ENCODE measurements at regions of chr16 and their contacts with region 1.

Region 1: DNA sequence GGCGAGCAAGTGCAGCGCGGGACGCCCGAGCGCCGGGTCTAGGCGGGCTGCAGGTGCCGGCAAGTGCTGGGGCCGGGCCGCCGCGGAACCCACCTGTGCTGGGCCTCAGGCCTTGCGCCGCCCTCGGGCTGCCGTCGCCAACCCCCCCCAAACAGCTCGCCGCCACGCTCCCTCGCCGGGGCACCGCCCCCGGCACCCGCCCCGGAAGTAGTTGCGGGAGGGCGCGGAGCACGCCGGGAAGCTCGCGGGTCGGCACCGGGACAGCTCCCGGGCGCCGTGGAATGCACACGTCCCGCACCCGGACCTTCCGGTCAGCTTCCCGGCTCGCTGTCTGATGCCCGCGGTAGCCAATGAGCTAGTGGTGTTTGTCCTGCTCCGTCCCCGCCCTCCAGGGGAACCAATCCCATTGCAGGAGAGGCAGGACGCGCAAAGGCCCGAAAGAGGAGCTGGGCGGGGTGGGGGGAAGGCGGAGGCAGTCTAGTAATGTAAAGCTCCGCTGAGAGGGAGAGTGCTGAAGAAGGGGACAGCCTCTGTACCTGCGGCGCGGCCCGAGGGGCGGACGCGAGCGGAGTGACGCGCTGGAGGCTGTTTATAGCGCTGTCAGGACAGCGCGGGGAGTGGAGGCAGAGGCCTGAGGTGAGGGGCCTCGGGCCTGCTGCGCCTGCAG is at the starts of genes ANKS3 and DNAAF8:
- DNase-seq: peak; percentile 97
- ATAC-seq: peak; percentile 98
- H3K4me3 ChIP-seq: peak within 1 kb of the TSS; percentile 92 to 100 (median 92)
- H3K27ac ChIP-seq: peak within 1 kb of the TSS; percentile 84 to 97 (median 85)
- H3K4me1 ChIP-seq: peaks cover 13 to 16% of the 10 kb centered on the region in 2 donors
- H3K27me3 ChIP-seq: no peaks in the 10 kb centered on the region
- CTCF ChIP-seq: no peak
- POLR2A ChIP-seq: peak; percentile 48 to 50
- total RNA-seq, gene ANKS3: 6.7 to 16.6 (median 9.0) TPM
- total RNA-seq, gene DNAAF8: 0.44 to 1.2 (median 0.91) TPM

Region 2: GRCh38 chr16:4624015-4624826 is 110.0 kb before region 1 on chr16 and contains the start of gene MGRN1:
- in situ Hi-C with region 1: no loop called
- intact Hi-C with region 1: loop called (anchors 1 kb)
- DNase-seq: peak; percentile 93 to 95
- ATAC-seq: peak; percentile 97 to 98
- H3K4me3 ChIP-seq: peak within 1 kb of the TSS; percentile 77 to 97 (median 82)
- H3K27ac ChIP-seq: peak within 1 kb of the TSS; percentile 88 to 96 (median 94)
- H3K4me1 ChIP-seq: peaks cover 19% of the 10 kb centered on the region in 2 donors
- H3K27me3 ChIP-seq: no peaks in the 10 kb centered on the region
- CTCF ChIP-seq: peak; percentile 91 to 97 (median 95)
- POLR2A ChIP-seq: no peak
- total RNA-seq, gene MGRN1: 33.8 to 62.9 (median 55.0) TPM

Region 3: GRCh38 chr16:4693296-4693955 is 40.8 kb before region 1 on chr16 and contains the start of gene NUDT16L1:
- in situ Hi-C with region 1: no loop called
- intact Hi-C with region 1: loop called (anchors 2 kb)
- DNase-seq: peak; percentile 90 to 95
- ATAC-seq: peak; percentile 83 to 86
- H3K4me3 ChIP-seq: peak within 1 kb of the TSS; percentile 68 to 90 (median 82)
- H3K27ac ChIP-seq: peak within 1 kb of the TSS; percentile 66 to 89 (median 82)
- H3K4me1 ChIP-seq: peaks cover 19 to 25% of the 10 kb centered on the region in 2 donors
- H3K27me3 ChIP-seq: no peaks in the 10 kb centered on the region
- CTCF ChIP-seq: peak in 4 of 5 experiments; percentile 31 to 57 (median 42)
- POLR2A ChIP-seq: peak; percentile 43 to 50
- total RNA-seq, gene NUDT16L1: 7.4 to 10.2 (median 8.8) TPM

Region 4: DNA sequence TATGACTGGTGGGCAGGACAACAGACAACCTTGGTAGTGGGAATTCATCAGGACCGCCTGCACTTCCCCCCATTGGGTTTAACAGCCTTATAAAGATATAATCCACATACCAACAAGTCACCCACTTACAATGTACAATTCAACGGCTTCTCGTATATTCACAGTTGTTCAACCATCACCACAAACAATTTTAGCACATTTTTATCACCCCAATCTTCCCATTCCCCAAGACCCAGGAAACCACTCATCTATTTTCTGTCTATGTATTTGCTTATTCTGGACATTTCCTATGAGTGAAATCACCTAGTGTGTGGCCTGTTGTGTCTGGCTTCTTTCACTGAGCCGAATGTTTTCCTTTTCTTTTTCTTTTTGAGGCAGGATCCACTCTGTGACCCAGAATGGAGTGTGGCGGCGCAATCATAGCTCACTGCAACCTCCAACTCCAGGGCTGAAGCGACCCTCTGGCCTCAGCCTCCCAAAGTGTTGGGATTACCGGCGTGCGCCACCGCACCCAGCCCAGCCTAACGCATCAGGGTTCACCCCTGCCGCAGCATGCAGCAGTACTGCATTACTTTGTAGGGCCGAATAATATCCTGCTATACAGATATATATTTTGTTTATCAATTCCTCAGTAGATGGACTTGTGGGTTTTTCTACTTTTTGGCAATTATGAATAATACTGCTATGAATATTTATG is 11.0 kb before region 1 on chr16:
- in situ Hi-C with region 1: no loop called
- intact Hi-C with region 1: no loop called
- DNase-seq: no peak
- ATAC-seq: no peak
- H3K4me3 ChIP-seq: no peak overlapping the region
- H3K27ac ChIP-seq: no peak overlapping the region
- H3K4me1 ChIP-seq: no peaks in the 10 kb centered on the region
- H3K27me3 ChIP-seq: no peaks in the 10 kb centered on the region
- CTCF ChIP-seq: no peak
- POLR2A ChIP-seq: no peak

Region 5: GRCh38 chr16:4746991-4747574 is 12.9 kb after region 1 on chr16:
- in situ Hi-C with region 1: no loop called
- intact Hi-C with region 1: no loop called
- DNase-seq: no peak
- ATAC-seq: no peak
- H3K4me3 ChIP-seq: no peak overlapping the region
- H3K27ac ChIP-seq: no peak overlapping the region
- H3K4me1 ChIP-seq: peaks cover 0 to 3% of the 10 kb centered on the region in 2 donors
- H3K27me3 ChIP-seq: peaks cover 0 to 3% (median 0%) of the 10 kb centered on the region in 3 donors
- CTCF ChIP-seq: no peak
- POLR2A ChIP-seq: no peak

Region 6: DNA sequence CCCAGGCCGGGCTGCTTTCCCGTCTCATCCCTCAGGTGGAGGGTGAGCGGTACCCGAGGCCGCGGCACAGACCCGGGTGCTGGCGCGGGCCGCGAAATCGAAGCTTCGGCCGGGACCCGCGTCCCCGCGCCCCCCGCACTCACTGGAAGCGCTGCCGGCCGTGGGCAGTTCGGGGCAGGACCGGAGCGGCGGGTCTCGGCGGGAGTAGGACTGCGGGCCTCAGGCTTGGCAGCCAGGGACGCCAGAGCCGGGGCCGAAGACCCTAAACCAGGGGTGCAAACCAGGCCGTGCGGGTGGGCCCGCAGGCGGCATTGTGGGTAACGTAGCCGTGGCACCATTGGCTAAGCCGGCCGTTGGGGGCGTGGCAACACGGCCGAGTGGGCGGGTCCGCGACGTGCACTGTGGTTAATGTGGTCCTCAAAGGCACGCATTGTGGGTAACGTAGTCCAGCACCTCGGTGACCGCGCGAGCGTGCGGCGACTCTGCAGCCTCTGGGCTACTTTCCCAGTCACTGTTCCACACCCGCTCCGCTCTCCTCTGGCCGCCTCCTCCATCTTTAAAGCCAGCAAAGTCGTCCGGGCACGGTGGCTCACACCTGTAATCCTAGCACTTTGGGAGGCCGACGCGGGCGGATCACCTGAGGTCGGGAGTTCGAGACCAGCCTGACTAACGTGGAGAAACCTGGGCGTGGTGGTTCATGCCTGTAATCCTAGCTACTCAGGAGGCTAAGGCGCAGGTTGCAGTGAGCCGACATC is 32.9 kb after region 1 on chr16 and contains the start of gene ZNF500:
- in situ Hi-C with region 1: no loop called
- intact Hi-C with region 1: loop called (anchors 1 kb)
- DNase-seq: peak; percentile 97 to 98
- ATAC-seq: peak; percentile 89 to 95
- H3K4me3 ChIP-seq: peak within 1 kb of the TSS; percentile 80 to 99 (median 90)
- H3K27ac ChIP-seq: peak within 1 kb of the TSS; percentile 83 to 95 (median 92)
- H3K4me1 ChIP-seq: peaks cover 25 to 30% of the 10 kb centered on the region in 2 donors
- H3K27me3 ChIP-seq: no peaks in the 10 kb centered on the region
- CTCF ChIP-seq: no peak
- POLR2A ChIP-seq: peak; percentile 69 to 70
- total RNA-seq, gene ZNF500: 6.3 to 7.3 (median 6.9) TPM

Region 7: DNA sequence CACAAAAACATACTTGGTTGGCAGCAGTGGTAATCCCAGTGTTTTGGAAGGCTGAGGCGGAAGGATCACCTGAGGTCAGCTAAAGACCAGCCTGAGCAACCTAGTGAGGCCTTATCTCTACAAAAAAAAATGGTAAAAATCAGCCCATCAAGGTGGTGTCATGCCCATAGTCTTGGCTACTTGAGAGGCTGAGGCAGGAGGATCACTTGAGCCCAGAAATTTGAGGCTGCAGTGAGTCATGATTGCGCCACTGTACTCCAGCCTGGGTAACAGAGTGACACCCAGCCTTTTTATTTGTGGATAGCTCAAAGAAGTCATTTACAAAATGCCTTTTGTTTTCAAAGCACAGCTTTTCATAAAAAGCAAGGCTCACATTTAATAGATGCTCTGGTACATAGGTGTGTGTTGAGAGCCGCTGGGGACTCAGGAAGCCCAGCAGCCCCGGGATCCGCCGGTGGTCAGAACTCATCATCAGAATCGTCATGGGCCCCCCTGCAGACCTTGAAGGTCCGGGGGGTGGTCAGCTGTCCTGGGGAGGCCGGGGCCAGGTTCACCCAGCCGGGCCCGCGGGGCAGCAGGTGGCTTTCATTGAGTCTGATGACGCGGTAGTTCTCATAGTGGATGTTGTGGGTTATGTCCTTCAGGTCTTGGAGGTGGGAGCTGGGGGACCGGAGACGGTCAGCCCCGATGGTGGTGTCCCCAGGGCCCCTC is 43.3 kb after region 1 on chr16:
- in situ Hi-C with region 1: no loop called
- intact Hi-C with region 1: no loop called
- DNase-seq: no peak
- ATAC-seq: no peak
- H3K4me3 ChIP-seq: no peak overlapping the region
- H3K27ac ChIP-seq: no peak overlapping the region
- H3K4me1 ChIP-seq: no peaks in the 10 kb centered on the region
- H3K27me3 ChIP-seq: no peaks in the 10 kb centered on the region
- CTCF ChIP-seq: no peak
- POLR2A ChIP-seq: no peak

Region 8: DNA sequence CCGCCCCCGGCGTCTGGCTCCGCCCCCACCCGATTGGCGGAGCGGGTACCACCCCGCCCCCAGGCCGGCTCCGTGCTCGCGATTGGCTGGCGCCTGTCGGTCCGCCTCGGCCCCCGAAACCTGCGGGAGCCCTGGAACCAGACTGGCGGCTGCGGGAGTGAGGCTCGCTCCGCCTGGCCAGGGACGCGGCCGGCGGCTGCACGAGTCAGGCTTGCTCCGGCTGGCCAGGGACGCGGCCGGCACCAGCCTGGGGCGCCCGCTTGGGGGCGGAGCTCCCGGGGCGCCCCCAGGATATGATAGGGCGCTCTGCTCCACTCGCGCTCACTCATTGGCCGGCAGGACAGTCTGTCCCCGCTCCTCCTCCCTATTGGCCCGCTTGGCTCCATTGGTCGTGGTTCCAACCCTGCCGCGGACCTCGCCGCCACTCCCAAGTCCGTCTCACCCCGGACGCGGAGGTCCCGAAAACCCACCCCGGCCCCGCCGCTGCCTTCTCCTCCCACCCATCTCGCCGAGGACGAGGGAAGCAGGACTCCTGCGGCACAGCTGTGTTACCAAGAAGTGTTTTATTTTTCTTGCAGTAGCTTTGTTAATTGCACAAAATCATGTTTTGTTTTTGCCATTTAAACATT is 68.6 kb after region 1 on chr16:
- in situ Hi-C with region 1: no loop called
- intact Hi-C with region 1: loop called (anchors 1 kb)
- DNase-seq: peak; percentile 91 to 93
- ATAC-seq: peak; percentile 95
- H3K4me3 ChIP-seq: peak overlapping the region; percentile 64 to 97 (median 84)
- H3K27ac ChIP-seq: peak overlapping the region; percentile 76 to 93 (median 86)
- H3K4me1 ChIP-seq: peaks cover 11 to 17% of the 10 kb centered on the region in 2 donors
- H3K27me3 ChIP-seq: no peaks in the 10 kb centered on the region
- CTCF ChIP-seq: peak in 4 of 5 experiments; percentile 32 to 60 (median 42)
- POLR2A ChIP-seq: peak; percentile 1 to 20

Measured in gastrocnemius medialis (tissue), 4 donors.